ENCODE measurements at regions of chr2 and their contacts with region 1.

Region 1: GRCh38 chr2:16773080-16773713 is 107.6 kb upstream of the CYRIA start:
- DNase-seq: peak in 1 of 6 donors; percentile 34
- ATAC-seq: peak; percentile 66 to 95 (median 90)
- H3K4me3 ChIP-seq: no peak overlapping the region
- H3K27ac ChIP-seq: no peak overlapping the region
- H3K4me1 ChIP-seq: no peaks in the 10 kb centered on the region
- H3K27me3 ChIP-seq: peaks cover 0 to 4% (median 0%) of the 10 kb centered on the region in 4 donors
- CTCF ChIP-seq: peak in 2 of 4 donors; percentile 41 to 47

Region 2: GRCh38 chr2:16330571-16330970 is 442.6 kb before region 1 on chr2:
- intact Hi-C with region 1: no loop called
- DNase-seq: no peak
- ATAC-seq: no peak
- H3K4me3 ChIP-seq: no peak overlapping the region
- H3K27ac ChIP-seq: no peak overlapping the region
- H3K4me1 ChIP-seq: no peaks in the 10 kb centered on the region
- H3K27me3 ChIP-seq: no peaks in the 10 kb centered on the region
- CTCF ChIP-seq: no peak

Region 3: DNA sequence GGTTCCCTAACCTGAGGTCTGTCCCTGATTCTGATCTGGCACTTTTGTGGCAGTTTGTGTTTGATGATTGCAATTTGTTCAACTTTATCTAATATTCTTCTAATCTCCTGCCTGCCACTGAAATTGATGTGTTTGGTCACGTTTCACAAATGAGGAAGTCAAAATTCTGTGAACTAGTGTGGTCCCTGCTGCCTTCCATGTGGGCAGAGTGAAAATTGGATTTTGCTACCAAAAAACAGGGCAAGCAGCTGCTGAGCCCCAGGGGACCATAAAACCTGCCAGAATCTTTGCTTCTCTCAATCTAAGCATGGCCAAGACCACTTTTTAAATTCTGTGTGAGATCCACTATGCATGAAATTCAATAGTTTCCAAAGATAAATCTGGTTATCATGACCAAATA is 87.9 kb after region 1 on chr2:
- intact Hi-C with region 1: no loop called
- DNase-seq: no peak
- ATAC-seq: no peak
- H3K4me3 ChIP-seq: no peak overlapping the region
- H3K27ac ChIP-seq: no peak overlapping the region
- H3K4me1 ChIP-seq: no peaks in the 10 kb centered on the region
- H3K27me3 ChIP-seq: no peaks in the 10 kb centered on the region
- CTCF ChIP-seq: no peak

Region 4: DNA sequence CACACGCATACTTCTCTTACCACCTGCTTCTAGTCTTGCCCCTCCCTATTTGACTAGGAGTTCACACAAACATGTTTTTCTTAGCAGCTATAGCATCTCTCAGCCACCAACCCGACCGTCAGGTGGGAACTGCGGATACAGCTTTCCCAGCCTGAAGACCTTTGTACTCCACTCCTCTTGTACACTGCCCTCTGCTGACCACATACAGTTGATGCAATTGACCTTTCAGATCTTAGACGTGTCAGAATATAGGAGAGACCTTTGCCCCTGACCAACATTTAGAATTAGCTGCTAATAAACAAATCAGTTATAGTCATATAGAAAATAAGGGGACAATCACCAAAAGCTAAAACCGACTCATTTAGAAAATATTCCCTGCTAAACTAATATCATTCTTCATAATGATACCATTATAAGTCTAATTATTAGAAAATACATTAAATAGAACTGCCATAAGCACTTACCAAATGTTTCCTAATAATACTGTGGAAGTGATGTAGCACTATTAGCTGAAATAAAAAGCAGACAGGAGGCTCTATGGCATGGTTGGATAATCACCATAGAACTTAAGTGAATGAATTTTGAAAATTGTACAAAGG is 536.6 kb after region 1 on chr2:
- intact Hi-C with region 1: loop called in 2 of 3 experiments (anchors 5 to 10 kb)
- DNase-seq: peak in 3 of 6 donors; percentile 23 to 55 (median 25)
- ATAC-seq: peak; percentile 63 to 95 (median 91)
- H3K4me3 ChIP-seq: no peak overlapping the region
- H3K27ac ChIP-seq: no peak overlapping the region
- H3K4me1 ChIP-seq: no peaks in the 10 kb centered on the region
- H3K27me3 ChIP-seq: no peaks in the 10 kb centered on the region
- CTCF ChIP-seq: peak; percentile 44 to 70 (median 54)